ENCODE measurements at regions of chr16 and their contacts with region 1.

Region 1: DNA sequence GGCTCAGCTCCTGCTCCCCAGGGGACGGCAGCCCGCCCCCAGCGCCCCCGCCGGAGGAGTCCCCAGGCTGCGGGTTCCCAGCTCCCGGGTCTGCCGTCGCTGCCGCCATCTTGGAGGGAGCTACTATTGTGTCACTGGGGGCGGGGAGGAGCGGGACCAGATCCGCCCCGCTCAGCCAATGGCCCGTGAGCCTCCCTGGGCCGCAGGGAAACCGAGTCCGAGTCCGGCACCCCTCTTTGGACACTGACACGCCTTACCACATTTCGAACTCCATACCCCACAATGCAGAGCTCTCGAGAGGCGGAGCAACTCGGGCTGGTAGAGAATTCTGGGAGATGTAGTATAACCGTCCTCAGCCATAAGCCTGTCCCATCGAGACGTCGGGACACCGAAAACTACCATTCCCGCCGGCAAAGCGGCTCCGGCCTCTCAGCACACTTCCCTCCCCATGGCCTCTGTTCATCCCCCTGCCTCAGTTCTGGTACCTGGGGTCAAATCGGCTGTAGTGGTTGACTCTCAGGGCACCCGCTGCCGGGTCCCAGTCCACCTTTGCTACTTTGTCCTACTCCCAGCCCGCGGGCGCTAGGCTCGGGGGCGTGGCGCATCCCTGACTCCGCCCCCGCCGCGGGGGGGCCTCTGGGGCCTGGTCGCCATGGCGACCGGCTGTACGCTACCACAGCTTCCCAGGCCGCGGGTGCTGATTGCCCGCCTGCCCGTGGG is at the starts of genes RANBP10 and TSNAXIP1:
- DNase-seq: peak; percentile 98
- H3K4me3 Mint-ChIP-seq: peak within 1 kb of the TSS; percentile 86
- H3K27ac Mint-ChIP-seq: peak within 1 kb of the TSS; percentile 81
- H3K4me1 Mint-ChIP-seq: peaks cover 36% of the 10 kb centered on the region
- H3K27me3 Mint-ChIP-seq: no peaks in the 10 kb centered on the region
- total RNA-seq, gene RANBP10: 12.4 to 16.1 TPM
- total RNA-seq, gene TSNAXIP1: 0.35 to 0.50 TPM

Region 2: GRCh38 chr16:67480833-67481560 is 325.6 kb before region 1 on chr16 and contains the start of gene ATP6V0D1:
- CTCF ChIA-PET with region 1: no interaction called
- intact Hi-C with region 1: loop called (anchors 1 kb)
- DNase-seq: peak; percentile 99
- H3K4me3 Mint-ChIP-seq: peak within 1 kb of the TSS; percentile 100
- H3K27ac Mint-ChIP-seq: peak within 1 kb of the TSS; percentile 99
- H3K4me1 Mint-ChIP-seq: peaks cover 42% of the 10 kb centered on the region
- H3K27me3 Mint-ChIP-seq: no peaks in the 10 kb centered on the region
- total RNA-seq, gene ATP6V0D1: 11.9 to 15.3 TPM

Region 3: DNA sequence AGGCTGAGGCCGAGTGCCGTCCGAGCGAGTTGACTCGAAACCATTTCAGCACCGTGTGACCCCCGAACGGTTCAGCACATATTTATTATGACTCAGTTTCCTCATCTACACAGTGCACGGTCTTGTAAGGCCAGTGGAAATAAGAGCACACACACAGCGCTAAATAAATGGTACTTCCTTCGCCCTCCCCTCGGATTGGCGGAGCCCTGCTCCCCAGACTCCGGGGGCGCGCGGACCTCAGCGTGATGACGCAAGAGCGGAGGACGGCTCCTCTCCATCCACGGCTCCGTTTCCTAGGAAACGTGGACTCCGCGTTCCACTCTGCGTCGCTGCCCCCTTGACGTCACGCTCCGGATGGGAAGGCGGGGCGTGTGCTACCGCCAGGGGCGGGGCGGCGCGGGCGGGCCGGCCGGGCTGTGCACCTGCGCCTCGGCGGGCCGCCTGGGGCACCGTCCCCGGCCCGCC is 146.0 kb before region 1 on chr16 and contains the start of gene PARD6A:
- CTCF ChIA-PET with region 1: no interaction called
- intact Hi-C with region 1: loop called (anchors 2 kb)
- DNase-seq: peak; percentile 97
- H3K4me3 Mint-ChIP-seq: peak within 1 kb of the TSS; percentile 90
- H3K27ac Mint-ChIP-seq: peak within 1 kb of the TSS; percentile 92
- H3K4me1 Mint-ChIP-seq: peaks cover 21% of the 10 kb centered on the region
- H3K27me3 Mint-ChIP-seq: no peaks in the 10 kb centered on the region
- total RNA-seq, gene PARD6A: 7.3 to 8.4 TPM

Region 4: DNA sequence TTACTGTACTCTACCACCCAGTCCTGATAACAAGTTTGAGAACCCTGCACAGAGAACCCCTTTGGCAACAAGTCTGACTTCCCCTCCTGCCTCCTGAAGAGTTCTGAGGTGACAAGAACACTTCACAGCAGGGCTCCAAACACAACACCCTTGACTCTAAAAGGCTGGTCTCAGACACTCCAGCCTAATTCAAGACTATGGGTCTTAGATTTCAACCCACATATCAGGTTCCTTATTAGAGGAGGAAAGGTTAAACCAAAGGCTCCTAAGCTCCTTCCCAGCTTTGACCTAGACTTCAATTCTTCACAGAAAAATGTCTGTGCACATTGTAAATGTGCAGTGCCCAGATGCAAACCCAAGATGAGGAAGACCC is 23.2 kb before region 1 on chr16:
- CTCF ChIA-PET with region 1: no interaction called
- intact Hi-C with region 1: no loop called
- DNase-seq: no peak
- H3K4me3 Mint-ChIP-seq: no peak overlapping the region
- H3K27ac Mint-ChIP-seq: no peak overlapping the region
- H3K4me1 Mint-ChIP-seq: peaks cover 34% of the 10 kb centered on the region
- H3K27me3 Mint-ChIP-seq: no peaks in the 10 kb centered on the region

Region 5: GRCh38 chr16:67833418-67834241 is 27.0 kb after region 1 on chr16:
- CTCF ChIA-PET with region 1: interaction called, 7 read pairs
- intact Hi-C with region 1: loop called (anchors 1 kb)
- DNase-seq: peak; percentile 98
- H3K4me3 Mint-ChIP-seq: peak overlapping the region; percentile 86
- H3K27ac Mint-ChIP-seq: no peak overlapping the region
- H3K4me1 Mint-ChIP-seq: peaks cover 6% of the 10 kb centered on the region
- H3K27me3 Mint-ChIP-seq: no peaks in the 10 kb centered on the region

Region 6: GRCh38 chr16:67968400-67969253 is 162.0 kb after region 1 on chr16 and contains the start of gene SLC12A4:
- CTCF ChIA-PET with region 1: interaction called, 5 read pairs
- intact Hi-C with region 1: loop called (anchors 1 kb)
- DNase-seq: peak; percentile 93
- H3K4me3 Mint-ChIP-seq: peak within 1 kb of the TSS; percentile 97
- H3K27ac Mint-ChIP-seq: peak within 1 kb of the TSS; percentile 78
- H3K4me1 Mint-ChIP-seq: peaks cover 10% of the 10 kb centered on the region
- H3K27me3 Mint-ChIP-seq: no peaks in the 10 kb centered on the region
- total RNA-seq, gene SLC12A4: 24.3 to 28.9 TPM